Sigmoid colon (tissue), 7 donors: ENCODE measurements at regions of chr16 and their contacts with region 1.

Region 1: GRCh38 chr16:23556881-23557778 is at the starts of genes EARS2 and UBFD1:
- DNase-seq: peak; percentile 99
- H3K4me3 ChIP-seq: peak within 1 kb of the TSS; percentile 81 to 93 (median 84)
- H3K27ac ChIP-seq: peak within 1 kb of the TSS; percentile 84 to 96 (median 92)
- H3K4me1 ChIP-seq: peaks cover 0 to 45% (median 29%) of the 10 kb centered on the region in 4 donors
- H3K27me3 ChIP-seq: no peaks in the 10 kb centered on the region
- CTCF ChIP-seq: peak; percentile 81 to 95 (median 91)
- EP300 ChIP-seq: peak in 1 of 4 donors; percentile 57
- POLR2A ChIP-seq: peak; percentile 7 to 28
- total RNA-seq, gene EARS2: 7.5 to 18.3 (median 11.2) TPM
- total RNA-seq, gene UBFD1: 45.1 to 101 (median 57.6) TPM

Region 2: GRCh38 chr16:23452572-23453337 is 104.4 kb before region 1 on chr16 and contains the start of gene COG7:
- intact Hi-C with region 1: loop called (anchors 5 kb)
- DNase-seq: peak; percentile 93
- H3K4me3 ChIP-seq: peak within 1 kb of the TSS; percentile 60 to 87 (median 78)
- H3K27ac ChIP-seq: peak within 1 kb of the TSS; percentile 83 to 88 (median 86)
- H3K4me1 ChIP-seq: peaks cover 0 to 40% (median 24%) of the 10 kb centered on the region in 4 donors
- H3K27me3 ChIP-seq: no peaks in the 10 kb centered on the region
- CTCF ChIP-seq: no peak
- EP300 ChIP-seq: peak in 1 of 4 donors; percentile 24
- POLR2A ChIP-seq: no peak
- total RNA-seq, gene COG7: 12.0 to 25.5 (median 13.9) TPM

Region 3: DNA sequence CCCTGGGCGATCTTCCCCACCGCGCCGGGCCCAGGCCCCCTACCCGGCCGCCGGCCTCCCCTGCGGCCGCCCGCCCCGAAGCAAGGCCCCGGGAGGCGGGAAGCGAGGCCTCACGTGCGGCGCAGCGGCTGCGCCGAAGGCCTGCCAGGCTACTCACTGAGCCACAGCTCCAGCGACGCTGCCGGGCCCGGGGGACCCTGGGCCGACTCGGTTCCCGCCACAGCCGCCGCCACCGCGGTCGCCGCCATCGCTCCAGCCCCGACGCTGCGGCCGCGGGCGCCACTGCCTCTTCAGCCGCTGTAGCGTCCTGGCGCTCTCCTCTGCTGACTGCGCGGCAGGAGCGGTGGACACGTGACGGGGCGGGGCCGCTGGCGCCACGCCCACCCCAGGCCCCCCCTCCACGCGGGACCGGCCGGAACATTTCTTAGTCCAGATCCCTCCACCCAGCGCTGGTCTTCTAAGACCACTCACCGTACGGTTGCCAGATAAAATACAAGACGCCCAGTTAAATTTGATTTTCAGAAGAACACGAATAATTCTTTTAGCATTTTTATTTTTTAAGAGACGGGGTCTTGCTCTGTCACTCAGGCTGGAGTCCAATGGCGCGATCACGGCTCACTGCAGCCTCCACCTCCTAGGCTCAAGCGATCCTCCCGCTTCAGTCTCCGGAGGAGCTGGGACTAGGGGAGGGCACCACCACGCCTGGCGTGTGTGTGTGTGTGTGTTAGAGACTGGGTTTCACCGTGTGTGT is 46.8 kb before region 1 on chr16 and contains the start of gene GGA2:
- intact Hi-C with region 1: loop called (anchors 1 kb)
- DNase-seq: peak; percentile 94
- H3K4me3 ChIP-seq: peak within 1 kb of the TSS; percentile 52 to 98 (median 94)
- H3K27ac ChIP-seq: peak within 1 kb of the TSS; percentile 80 to 91 (median 89)
- H3K4me1 ChIP-seq: peaks cover 0 to 35% (median 25%) of the 10 kb centered on the region in 4 donors
- H3K27me3 ChIP-seq: no peaks in the 10 kb centered on the region
- CTCF ChIP-seq: no peak
- EP300 ChIP-seq: no peak
- POLR2A ChIP-seq: peak in 1 of 2 donors; percentile 24
- total RNA-seq, gene GGA2: 29.1 to 55.7 (median 34.7) TPM

Region 4: GRCh38 chr16:23595951-23596720 is 39.0 kb after region 1 on chr16 and contains the start of gene NDUFAB1:
- intact Hi-C with region 1: loop called (anchors 1 kb)
- DNase-seq: peak; percentile 92
- H3K4me3 ChIP-seq: peak within 1 kb of the TSS; percentile 65 to 96 (median 90)
- H3K27ac ChIP-seq: peak within 1 kb of the TSS; percentile 82 to 87 (median 85)
- H3K4me1 ChIP-seq: peaks cover 0 to 31% (median 16%) of the 10 kb centered on the region in 4 donors
- H3K27me3 ChIP-seq: no peaks in the 10 kb centered on the region
- CTCF ChIP-seq: peak; percentile 85 to 99 (median 92)
- EP300 ChIP-seq: no peak
- POLR2A ChIP-seq: no peak
- total RNA-seq, gene NDUFAB1: 101 to 179 (median 159) TPM